Natural killer cell (primary cell): ENCODE measurements at regions of chr6 and their contacts with region 1.

Region 1: GRCh38 chr6:42547407-42548329 is 16.2 kb upstream of the UBR2 start:
- DNase-seq: peak; percentile 87 to 91
- ATAC-seq: peak; percentile 100
- H3K4me3 ChIP-seq: peak overlapping the region; percentile 36
- H3K4me3 Mint-ChIP-seq: peak overlapping the region; percentile 66
- H3K27ac ChIP-seq: no peak overlapping the region
- H3K27ac Mint-ChIP-seq: peak overlapping the region in 1 of 2 donors; percentile 81
- H3K4me1 ChIP-seq: peaks cover 12% of the 10 kb centered on the region
- H3K4me1 Mint-ChIP-seq: peaks cover 8 to 12% of the 10 kb centered on the region in 2 donors
- H3K27me3 ChIP-seq: peaks cover 3% of the 10 kb centered on the region
- H3K27me3 Mint-ChIP-seq: peaks cover 13 to 16% of the 10 kb centered on the region in 2 donors
- CTCF ChIP-seq: peak; percentile 97

Region 2: GRCh38 chr6:41787219-41787917 is 760.3 kb before region 1 on chr6 and contains the start of gene TOMM6:
- intact Hi-C with region 1: loop called (anchors 10 kb)
- DNase-seq: peak; percentile 93 to 97
- ATAC-seq: peak; percentile 79 to 92 (median 84)
- H3K4me3 ChIP-seq: peak within 1 kb of the TSS; percentile 86
- H3K4me3 Mint-ChIP-seq: peak within 1 kb of the TSS; percentile 94
- H3K27ac ChIP-seq: peak within 1 kb of the TSS; percentile 92
- H3K27ac Mint-ChIP-seq: peak within 1 kb of the TSS; percentile 92 to 96
- H3K4me1 ChIP-seq: peaks cover 30% of the 10 kb centered on the region
- H3K4me1 Mint-ChIP-seq: peaks cover 0 to 25% of the 10 kb centered on the region in 2 donors
- H3K27me3 ChIP-seq: no peaks in the 10 kb centered on the region
- H3K27me3 Mint-ChIP-seq: no peaks in the 10 kb centered on the region
- CTCF ChIP-seq: peak; percentile 95
- total RNA-seq, gene TOMM6: 95.0 to 109 (median 96.6) TPM

Region 3: GRCh38 chr6:42075159-42075838 is 472.4 kb before region 1 on chr6:
- intact Hi-C with region 1: loop called (anchors 10 kb)
- DNase-seq: peak; percentile 37 to 62
- ATAC-seq: no peak
- H3K4me3 ChIP-seq: no peak overlapping the region
- H3K4me3 Mint-ChIP-seq: no peak overlapping the region
- H3K27ac ChIP-seq: no peak overlapping the region
- H3K27ac Mint-ChIP-seq: no peak overlapping the region
- H3K4me1 ChIP-seq: no peaks in the 10 kb centered on the region
- H3K4me1 Mint-ChIP-seq: no peaks in the 10 kb centered on the region
- H3K27me3 ChIP-seq: no peaks in the 10 kb centered on the region
- H3K27me3 Mint-ChIP-seq: no peaks in the 10 kb centered on the region
- CTCF ChIP-seq: peak; percentile 43

Region 4: GRCh38 chr6:42217519-42218367 is 329.9 kb before region 1 on chr6 and contains the start of gene MRPS10:
- intact Hi-C with region 1: loop called (anchors 5 kb)
- DNase-seq: peak; percentile 83 to 95
- ATAC-seq: peak; percentile 100
- H3K4me3 ChIP-seq: peak within 1 kb of the TSS; percentile 81
- H3K4me3 Mint-ChIP-seq: peak within 1 kb of the TSS; percentile 100
- H3K27ac ChIP-seq: peak within 1 kb of the TSS; percentile 66
- H3K27ac Mint-ChIP-seq: peak within 1 kb of the TSS; percentile 97 to 98
- H3K4me1 ChIP-seq: peaks cover 21% of the 10 kb centered on the region
- H3K4me1 Mint-ChIP-seq: peaks cover 11 to 19% of the 10 kb centered on the region in 2 donors
- H3K27me3 ChIP-seq: no peaks in the 10 kb centered on the region
- H3K27me3 Mint-ChIP-seq: no peaks in the 10 kb centered on the region
- CTCF ChIP-seq: no peak
- total RNA-seq, gene MRPS10: 21.8 to 25.4 (median 22.6) TPM

Region 5: GRCh38 chr6:42260972-42261371 is 286.7 kb before region 1 on chr6:
- intact Hi-C with region 1: loop called (anchors 1 kb)
- DNase-seq: peak in 1 of 2 donors; percentile 56
- ATAC-seq: peak; percentile 50 to 77 (median 70)
- H3K4me3 ChIP-seq: no peak overlapping the region
- H3K4me3 Mint-ChIP-seq: no peak overlapping the region
- H3K27ac ChIP-seq: no peak overlapping the region
- H3K27ac Mint-ChIP-seq: peak overlapping the region; percentile 47 to 75
- H3K4me1 ChIP-seq: peaks cover 15% of the 10 kb centered on the region
- H3K4me1 Mint-ChIP-seq: peaks cover 13 to 14% of the 10 kb centered on the region in 2 donors
- H3K27me3 ChIP-seq: no peaks in the 10 kb centered on the region
- H3K27me3 Mint-ChIP-seq: no peaks in the 10 kb centered on the region
- CTCF ChIP-seq: peak; percentile 68

Region 6: GRCh38 chr6:42306439-42307140 is 241.1 kb before region 1 on chr6:
- intact Hi-C with region 1: loop called (anchors 5 kb)
- DNase-seq: no peak
- ATAC-seq: no peak
- H3K4me3 ChIP-seq: no peak overlapping the region
- H3K4me3 Mint-ChIP-seq: no peak overlapping the region
- H3K27ac ChIP-seq: no peak overlapping the region
- H3K27ac Mint-ChIP-seq: no peak overlapping the region
- H3K4me1 ChIP-seq: peaks cover 2% of the 10 kb centered on the region
- H3K4me1 Mint-ChIP-seq: peaks cover 28% of the 10 kb centered on the region in 2 donors
- H3K27me3 ChIP-seq: no peaks in the 10 kb centered on the region
- H3K27me3 Mint-ChIP-seq: no peaks in the 10 kb centered on the region
- CTCF ChIP-seq: no peak

Region 7: DNA sequence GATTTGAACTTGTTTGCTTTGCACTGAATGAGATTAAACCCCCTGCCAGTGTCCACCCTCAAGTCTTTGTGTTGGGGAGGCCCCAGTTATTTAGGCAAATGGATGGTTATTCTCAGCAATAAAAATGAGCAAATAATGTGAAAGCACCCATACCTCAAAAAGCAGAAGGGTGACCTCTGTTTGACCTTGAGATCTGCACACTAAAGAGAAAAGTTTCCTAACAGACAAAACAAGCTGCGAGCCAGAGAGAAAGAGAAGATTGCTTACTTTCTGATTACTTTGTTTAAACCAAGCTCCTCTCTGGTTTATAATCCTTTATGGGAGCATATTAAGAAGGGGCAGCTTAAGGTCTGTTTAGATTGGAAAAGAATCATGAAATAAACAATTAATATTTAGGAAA is 65.5 kb before region 1 on chr6:
- intact Hi-C with region 1: no loop called
- DNase-seq: no peak
- ATAC-seq: no peak
- H3K4me3 ChIP-seq: no peak overlapping the region
- H3K4me3 Mint-ChIP-seq: no peak overlapping the region
- H3K27ac ChIP-seq: no peak overlapping the region
- H3K27ac Mint-ChIP-seq: no peak overlapping the region
- H3K4me1 ChIP-seq: no peaks in the 10 kb centered on the region
- H3K4me1 Mint-ChIP-seq: no peaks in the 10 kb centered on the region
- H3K27me3 ChIP-seq: no peaks in the 10 kb centered on the region
- H3K27me3 Mint-ChIP-seq: no peaks in the 10 kb centered on the region
- CTCF ChIP-seq: no peak